ENCODE measurements at regions of chr4 and their contacts with region 1.

Region 1: DNA sequence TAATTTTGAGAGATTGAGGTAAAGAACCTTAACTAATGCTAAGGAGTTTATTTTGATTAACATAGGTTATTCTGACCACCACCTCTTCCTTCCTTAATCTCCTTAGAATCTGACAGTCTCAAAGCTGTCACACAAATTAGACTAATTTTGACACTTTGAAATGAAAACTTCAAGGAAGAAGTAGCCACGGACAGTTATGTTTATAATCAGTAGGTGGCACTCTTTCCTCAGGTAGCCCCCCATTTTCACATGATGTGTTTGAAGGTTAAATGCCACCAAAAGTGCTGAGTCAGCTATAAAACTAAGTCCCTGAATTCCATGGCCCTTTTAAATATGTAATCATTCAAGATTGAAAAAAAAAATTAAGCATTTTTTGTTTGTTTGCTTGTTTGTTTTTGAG is 22.4 kb downstream of the TMEM33 start:
- DNase-seq: peak; percentile 48
- ATAC-seq: peak; percentile 24
- H3K4me3 ChIP-seq: no peak overlapping the region
- H3K4me3 Mint-ChIP-seq: no peak overlapping the region
- H3K27ac ChIP-seq: no peak overlapping the region
- H3K27ac Mint-ChIP-seq: no peak overlapping the region
- H3K4me1 ChIP-seq: no peaks in the 10 kb centered on the region
- H3K4me1 Mint-ChIP-seq: no peaks in the 10 kb centered on the region
- H3K27me3 ChIP-seq: no peaks in the 10 kb centered on the region
- H3K27me3 Mint-ChIP-seq: no peaks in the 10 kb centered on the region
- CTCF ChIP-seq: peak; percentile 67

Region 2: GRCh38 chr4:41887821-41888686 is 69.6 kb before region 1 on chr4:
- CTCF ChIA-PET with region 1: no interaction called
- POLR2A ChIA-PET with region 1: no interaction called
- intact Hi-C with region 1: no loop called
- DNase-seq: peak; percentile 56
- ATAC-seq: no peak
- H3K4me3 ChIP-seq: no peak overlapping the region
- H3K4me3 Mint-ChIP-seq: no peak overlapping the region
- H3K27ac ChIP-seq: no peak overlapping the region
- H3K27ac Mint-ChIP-seq: no peak overlapping the region
- H3K4me1 ChIP-seq: no peaks in the 10 kb centered on the region
- H3K4me1 Mint-ChIP-seq: no peaks in the 10 kb centered on the region
- H3K27me3 ChIP-seq: peaks cover 0 to 6% (median 0%) of the 10 kb centered on the region in 4 experiments
- H3K27me3 Mint-ChIP-seq: peaks cover 55% of the 10 kb centered on the region
- CTCF ChIP-seq: peak; percentile 93

Region 3: GRCh38 chr4:42282081-42282901 is 324.7 kb after region 1 on chr4:
- CTCF ChIA-PET with region 1: interaction called, 8 read pairs
- POLR2A ChIA-PET with region 1: no interaction called
- intact Hi-C with region 1: loop called (anchors 2 kb)
- DNase-seq: peak; percentile 59
- ATAC-seq: peak; percentile 45
- H3K4me3 ChIP-seq: no peak overlapping the region
- H3K4me3 Mint-ChIP-seq: peak overlapping the region; percentile 27
- H3K27ac ChIP-seq: no peak overlapping the region
- H3K27ac Mint-ChIP-seq: no peak overlapping the region
- H3K4me1 ChIP-seq: peaks cover 8 to 9% of the 10 kb centered on the region in 2 donors
- H3K4me1 Mint-ChIP-seq: peaks cover 14% of the 10 kb centered on the region
- H3K27me3 ChIP-seq: peaks cover 0 to 7% (median 4%) of the 10 kb centered on the region in 4 experiments
- H3K27me3 Mint-ChIP-seq: peaks cover 18% of the 10 kb centered on the region
- CTCF ChIP-seq: peak; percentile 77

Region 4: GRCh38 chr4:42816189-42816879 is 858.7 kb after region 1 on chr4:
- CTCF ChIA-PET with region 1: no interaction called
- POLR2A ChIA-PET with region 1: no interaction called
- intact Hi-C with region 1: no loop called
- DNase-seq: peak; percentile 6
- ATAC-seq: no peak
- H3K4me3 ChIP-seq: no peak overlapping the region
- H3K4me3 Mint-ChIP-seq: no peak overlapping the region
- H3K27ac ChIP-seq: no peak overlapping the region
- H3K27ac Mint-ChIP-seq: peak overlapping the region; percentile 39
- H3K4me1 ChIP-seq: peaks cover 11 to 17% of the 10 kb centered on the region in 2 donors
- H3K4me1 Mint-ChIP-seq: peaks cover 15% of the 10 kb centered on the region
- H3K27me3 ChIP-seq: peaks cover 0 to 8% (median 0%) of the 10 kb centered on the region in 4 experiments
- H3K27me3 Mint-ChIP-seq: peaks cover 5% of the 10 kb centered on the region
- CTCF ChIP-seq: no peak

Measured in B cell (primary cell).